WTC11 (cell line): ENCODE measurements at regions of chr1 and their contacts with region 1.

Region 1: GRCh38 chr1:145927063-145927886 is at the start of gene RBM8A:
- DNase-seq: peak; percentile 91
- ATAC-seq: peak; percentile 98
- H3K4me3 Mint-ChIP-seq: no peak within 1 kb of the TSS; the same call in none of the 2 replicates
- H3K27ac Mint-ChIP-seq: no peak within 1 kb of the TSS; the same call in 1 of the 2 replicates
- H3K4me1 Mint-ChIP-seq: peaks cover 17% of the 10 kb centered on the region
- H3K27me3 Mint-ChIP-seq: no peaks in the 10 kb centered on the region
- CTCF ChIP-seq: peak; percentile 23; the same call in 1 of the 2 replicates
- total RNA-seq, gene RBM8A: 199 to 215 TPM (median 212 TPM) in 3 replicates

Region 2: GRCh38 chr1:145695821-145696629 is 231.2 kb before region 1 on chr1:
- CTCF ChIA-PET with region 1: no interaction called
- POLR2A ChIA-PET with region 1: no interaction called
- DNase-seq: no peak
- ATAC-seq: no peak
- H3K4me3 Mint-ChIP-seq: no peak overlapping the region
- H3K27ac Mint-ChIP-seq: no peak overlapping the region
- H3K4me1 Mint-ChIP-seq: no peaks in the 10 kb centered on the region
- H3K27me3 Mint-ChIP-seq: peaks cover 12% of the 10 kb centered on the region
- CTCF ChIP-seq: no peak

Region 3: DNA sequence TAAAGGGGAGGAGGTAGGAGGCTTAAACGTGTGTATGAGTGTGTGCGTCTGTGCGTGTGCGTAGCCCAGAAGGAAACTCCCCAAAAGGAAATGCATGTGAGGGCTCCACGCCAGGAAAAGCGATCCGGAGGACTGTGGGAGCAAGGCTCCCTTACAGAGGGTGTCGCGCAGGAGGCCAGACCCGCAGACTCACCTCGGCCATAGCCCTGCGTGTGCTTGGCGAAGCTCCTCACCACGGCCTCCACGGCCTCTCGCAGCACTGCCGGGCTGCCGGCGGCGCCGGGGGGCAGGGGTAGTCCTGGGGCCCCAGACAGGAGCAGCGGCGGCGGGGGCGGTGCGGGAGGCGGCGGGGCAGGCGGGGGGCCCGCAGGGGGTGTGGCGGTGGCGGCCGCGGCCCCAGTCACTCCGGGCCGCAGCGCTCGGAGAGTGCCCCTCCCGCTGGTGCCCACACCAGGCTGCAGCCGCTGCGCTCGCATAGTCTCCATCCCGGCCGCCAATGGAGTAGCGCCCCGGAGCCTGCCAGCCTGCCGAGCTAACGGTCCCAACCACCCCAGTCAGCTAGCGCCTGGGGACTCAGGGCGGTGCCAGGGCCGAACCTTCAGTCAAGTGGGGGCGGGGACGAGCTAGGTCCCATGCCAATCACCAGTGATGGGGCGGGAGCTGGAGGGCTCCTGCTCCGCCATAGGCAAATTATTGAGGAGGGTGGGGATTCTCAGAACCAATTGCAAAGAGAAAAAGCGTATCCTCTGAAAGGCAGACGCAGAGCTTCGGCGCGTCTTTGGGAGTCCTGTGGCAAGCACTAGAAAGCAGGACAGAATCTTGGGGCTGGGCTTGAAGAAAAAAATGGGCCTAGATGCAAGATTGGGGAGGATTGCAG is 30.4 kb after region 1 on chr1 and contains the start of gene LIX1L:
- CTCF ChIA-PET with region 1: interaction called, 7 read pairs
- POLR2A ChIA-PET with region 1: interaction called, 11 read pairs
- DNase-seq: peak; percentile 96
- ATAC-seq: peak; percentile 86
- H3K4me3 Mint-ChIP-seq: peak within 1 kb of the TSS; percentile 70
- H3K27ac Mint-ChIP-seq: peak within 1 kb of the TSS; percentile 14; the same call in 1 of the 2 replicates
- H3K4me1 Mint-ChIP-seq: peaks cover 31% of the 10 kb centered on the region
- H3K27me3 Mint-ChIP-seq: peaks cover 92% of the 10 kb centered on the region
- CTCF ChIP-seq: no peak
- total RNA-seq, gene LIX1L: 3.0 to 3.8 TPM (median 3.8 TPM) in 3 replicates

Region 4: GRCh38 chr1:145963995-145964901 is 37.0 kb after region 1 on chr1 and contains the starts of genes ANKRD34A and POLR3GL:
- CTCF ChIA-PET with region 1: interaction called, 8 read pairs
- POLR2A ChIA-PET with region 1: interaction called, 17 read pairs
- DNase-seq: peak; percentile 96
- ATAC-seq: peak; percentile 85
- H3K4me3 Mint-ChIP-seq: peak within 1 kb of the TSS; percentile 91
- H3K27ac Mint-ChIP-seq: peak within 1 kb of the TSS; percentile 68; the same call in 1 of the 2 replicates
- H3K4me1 Mint-ChIP-seq: peaks cover 38% of the 10 kb centered on the region
- H3K27me3 Mint-ChIP-seq: peaks cover 70% of the 10 kb centered on the region
- CTCF ChIP-seq: no peak
- total RNA-seq, gene ANKRD34A: 0.21 to 0.44 TPM (median 0.22 TPM) in 3 replicates
- total RNA-seq, gene POLR3GL: 3.8 to 8.3 TPM (median 6.7 TPM) in 3 replicates